ENCODE measurements at regions of chr1 and their contacts with region 1.

Region 1: DNA sequence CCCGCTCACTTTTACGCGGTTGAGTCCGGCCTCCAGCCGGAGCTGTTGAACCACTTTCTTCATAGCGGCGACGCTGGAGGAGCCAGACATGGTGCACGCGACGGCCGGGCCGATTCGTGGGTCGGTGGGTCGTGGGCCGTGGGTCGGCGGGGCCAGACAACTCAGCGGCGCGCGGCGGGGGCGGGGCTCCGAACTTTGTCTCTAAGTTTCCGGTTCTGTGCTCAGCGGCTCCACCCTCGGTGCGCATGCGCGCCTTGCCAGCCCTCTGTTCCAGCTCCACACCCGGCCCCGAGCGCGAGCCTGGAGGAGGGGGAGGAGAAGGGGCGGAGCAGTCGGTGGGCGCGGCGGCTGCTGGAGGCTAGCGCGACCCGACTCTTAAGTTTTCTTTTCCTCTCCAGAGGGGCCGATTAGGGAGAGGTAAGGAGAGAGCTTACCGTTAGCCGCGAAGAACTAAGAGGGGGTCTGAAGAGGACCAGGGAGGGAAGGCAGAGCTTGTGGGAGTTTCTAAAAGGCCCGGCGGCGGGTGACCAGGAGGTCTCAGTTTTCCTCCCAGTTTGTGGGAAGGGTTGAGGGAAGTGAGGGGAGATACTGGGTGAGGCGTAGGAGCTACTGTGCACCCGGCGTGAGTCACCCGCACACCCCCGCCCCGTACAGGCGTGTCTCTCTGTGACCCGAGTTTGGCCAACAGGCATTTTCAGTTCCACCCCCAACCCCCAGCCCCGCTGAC is at the starts of genes GNG5 and SPATA1:
- DNase-seq: peak; percentile 98
- H3K4me3 Mint-ChIP-seq: peak within 1 kb of the TSS; percentile 95
- H3K27ac Mint-ChIP-seq: peak within 1 kb of the TSS; percentile 97
- H3K4me1 Mint-ChIP-seq: peaks cover 43% of the 10 kb centered on the region
- H3K27me3 Mint-ChIP-seq: no peaks in the 10 kb centered on the region
- total RNA-seq, gene GNG5: 122 to 127 TPM
- total RNA-seq, gene SPATA1: 4.0 to 4.7 TPM

Region 2: GRCh38 chr1:84442256-84442655 is 63.9 kb before region 1 on chr1:
- CTCF ChIA-PET with region 1: interaction called, 12 read pairs
- POLR2A ChIA-PET with region 1: interaction called, 25 read pairs
- DNase-seq: no peak
- H3K4me3 Mint-ChIP-seq: peak overlapping the region; percentile 38
- H3K27ac Mint-ChIP-seq: peak overlapping the region; percentile 83
- H3K4me1 Mint-ChIP-seq: peaks cover 22% of the 10 kb centered on the region
- H3K27me3 Mint-ChIP-seq: peaks cover 10% of the 10 kb centered on the region

Region 3: DNA sequence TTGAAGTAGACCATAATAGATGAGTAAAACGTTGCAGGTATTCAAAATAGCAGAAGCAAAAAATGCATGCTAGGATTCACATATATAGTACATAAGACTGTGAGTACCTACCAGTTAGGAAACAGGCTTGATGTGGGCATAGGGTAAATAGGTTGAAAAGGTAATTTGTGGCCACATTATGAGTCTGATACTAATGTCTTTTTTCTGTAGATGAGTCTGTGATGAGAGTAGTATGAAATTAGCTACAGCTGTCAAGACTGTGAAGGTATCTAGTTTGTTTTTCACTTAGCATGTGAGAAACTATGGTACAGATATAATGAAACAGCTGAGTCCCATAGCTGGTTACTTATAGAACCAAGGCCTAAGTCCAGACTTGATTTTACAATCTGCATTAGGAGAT is 12.4 kb before region 1 on chr1:
- CTCF ChIA-PET with region 1: no interaction called
- POLR2A ChIA-PET with region 1: interaction called, 30 read pairs
- DNase-seq: no peak
- H3K4me3 Mint-ChIP-seq: no peak overlapping the region
- H3K27ac Mint-ChIP-seq: no peak overlapping the region
- H3K4me1 Mint-ChIP-seq: peaks cover 14% of the 10 kb centered on the region
- H3K27me3 Mint-ChIP-seq: no peaks in the 10 kb centered on the region

Region 4: GRCh38 chr1:84620720-84621313 is 114.7 kb after region 1 on chr1:
- CTCF ChIA-PET with region 1: interaction called, 4 read pairs
- POLR2A ChIA-PET with region 1: interaction called, 12 read pairs
- DNase-seq: peak; percentile 85
- H3K4me3 Mint-ChIP-seq: peak overlapping the region; percentile 83
- H3K27ac Mint-ChIP-seq: peak overlapping the region; percentile 69
- H3K4me1 Mint-ChIP-seq: peaks cover 19% of the 10 kb centered on the region
- H3K27me3 Mint-ChIP-seq: no peaks in the 10 kb centered on the region